Left lung (tissue), 14 donors: ENCODE measurements at regions of chr7 and their contacts with region 1.

Region 1: DNA sequence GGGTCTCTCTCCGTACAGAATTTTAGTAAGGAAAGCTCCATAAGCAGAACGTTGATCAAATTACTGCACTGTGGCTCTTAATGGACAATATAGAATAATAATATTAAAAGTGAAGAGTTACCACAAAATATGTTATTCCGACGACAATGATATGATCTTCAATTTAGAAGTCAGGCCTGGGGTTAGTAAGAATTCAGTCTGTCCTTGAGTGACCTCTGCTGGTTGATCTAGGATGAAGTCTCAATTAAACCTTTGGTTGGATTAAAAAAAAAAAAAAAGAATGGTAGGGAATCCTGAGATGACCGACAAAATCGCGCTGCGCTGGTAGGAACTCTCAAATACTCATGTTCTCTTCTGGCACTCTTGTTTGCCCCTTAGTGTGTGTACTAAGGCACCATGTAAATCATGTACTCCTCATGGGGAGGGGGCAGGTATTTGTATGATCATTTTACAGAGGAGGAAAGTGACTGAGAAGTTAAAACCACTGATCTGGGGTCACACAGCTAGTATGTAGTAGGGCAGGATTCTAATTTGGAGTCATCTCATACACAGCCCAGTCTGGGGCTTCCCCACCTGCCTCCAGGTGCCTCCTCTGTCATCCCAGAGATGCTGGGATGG is 161.3 kb upstream of the NPVF start:
- DNase-seq: peak in 1 of 4 donors; percentile 81
- ATAC-seq: peak; percentile 62
- H3K4me3 ChIP-seq: no peak overlapping the region
- H3K27ac ChIP-seq: no peak overlapping the region
- H3K4me1 ChIP-seq: no peaks in the 10 kb centered on the region
- H3K27me3 ChIP-seq: no peaks in the 10 kb centered on the region
- CTCF ChIP-seq: peak in 1 of 2 donors; percentile 44

Region 2: DNA sequence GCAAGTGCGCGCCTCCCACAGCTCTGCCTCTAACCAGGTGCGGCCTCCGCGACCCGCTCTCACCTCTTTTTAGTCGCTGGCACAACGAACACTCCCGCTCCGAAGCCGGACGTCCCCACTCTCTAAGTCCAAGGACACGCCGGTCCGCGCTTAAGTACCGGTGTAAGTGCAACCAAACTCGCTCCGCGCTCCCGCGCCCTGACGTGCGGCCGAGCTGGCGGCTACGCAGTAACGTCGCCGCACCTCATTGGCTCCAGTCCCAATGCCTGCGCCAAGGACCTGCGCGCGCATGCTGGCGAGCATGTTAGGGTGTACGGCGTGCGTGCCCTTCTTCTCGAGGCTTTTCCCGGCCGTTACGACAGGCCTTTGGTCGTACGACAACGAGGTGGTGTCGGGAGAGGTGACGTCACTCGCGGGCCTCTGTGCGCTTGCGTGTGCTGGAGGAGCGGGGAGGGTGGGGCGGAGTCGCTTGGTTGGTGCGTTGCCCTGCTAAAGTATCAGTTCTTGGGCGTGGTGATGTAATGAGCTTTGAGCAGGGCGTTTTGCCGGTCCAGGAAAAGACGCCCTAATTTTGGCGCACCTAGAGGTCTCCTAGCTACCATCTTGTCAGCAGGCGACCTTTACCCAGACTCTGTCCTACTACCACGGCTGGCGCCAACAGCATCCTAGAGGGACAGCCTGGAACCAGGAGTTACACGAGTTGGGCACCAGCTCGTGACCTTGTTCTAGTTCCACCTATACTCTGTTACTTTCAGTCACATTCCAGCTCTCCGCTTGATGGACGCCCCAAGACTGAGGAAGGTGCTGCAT is 264.3 kb before region 1 on chr7 and contains the start of gene CYCS:
- intact Hi-C with region 1: no loop called
- DNase-seq: peak; percentile 99 to 100 (median 100)
- ATAC-seq: peak; percentile 97
- H3K4me3 ChIP-seq: peak within 1 kb of the TSS; percentile 80 to 96
- H3K27ac ChIP-seq: peak within 1 kb of the TSS; percentile 83 to 89
- H3K4me1 ChIP-seq: peaks cover 0 to 21% of the 10 kb centered on the region in 2 donors
- H3K27me3 ChIP-seq: no peaks in the 10 kb centered on the region
- CTCF ChIP-seq: no peak
- polyA plus RNA-seq, gene CYCS: 60.4 to 83.5 (median 64.1) TPM

Region 3: DNA sequence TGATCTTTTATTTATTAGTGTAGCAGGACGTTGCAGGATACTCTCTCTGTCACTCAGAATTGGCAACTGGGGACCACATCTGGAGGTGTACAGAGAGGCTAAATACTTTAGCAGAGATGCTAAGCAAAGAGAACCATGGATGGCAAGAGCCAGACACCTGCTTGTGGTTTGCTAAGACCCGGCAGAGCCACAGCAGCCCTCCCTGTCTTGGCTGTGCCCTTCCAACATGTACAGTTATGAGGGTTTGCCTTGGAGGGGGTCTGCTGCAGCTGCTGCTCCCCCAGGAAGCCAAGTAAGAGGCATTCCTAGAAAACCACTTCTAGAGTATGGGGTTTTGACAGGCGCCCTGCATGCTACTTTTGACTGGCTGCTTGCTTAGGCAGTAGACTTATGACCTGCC is 166.4 kb before region 1 on chr7:
- intact Hi-C with region 1: no loop called
- DNase-seq: no peak
- ATAC-seq: no peak
- H3K4me3 ChIP-seq: no peak overlapping the region
- H3K27ac ChIP-seq: no peak overlapping the region
- H3K4me1 ChIP-seq: no peaks in the 10 kb centered on the region
- H3K27me3 ChIP-seq: peaks cover 0 to 13% of the 10 kb centered on the region in 2 donors
- CTCF ChIP-seq: no peak

Region 4: GRCh38 chr7:25259587-25260243 is 129.9 kb before region 1 on chr7:
- intact Hi-C with region 1: loop called in 1 of 2 experiments (anchors 2 kb)
- DNase-seq: peak in 2 of 4 donors; percentile 74 to 83
- ATAC-seq: peak; percentile 89
- H3K4me3 ChIP-seq: no peak overlapping the region
- H3K27ac ChIP-seq: no peak overlapping the region
- H3K4me1 ChIP-seq: peaks cover 4 to 24% of the 10 kb centered on the region in 2 donors
- H3K27me3 ChIP-seq: peaks cover 0 to 4% of the 10 kb centered on the region in 2 donors
- CTCF ChIP-seq: peak; percentile 66 to 72

Region 5: GRCh38 chr7:25537662-25538375 is 148.2 kb after region 1 on chr7:
- intact Hi-C with region 1: no loop called
- DNase-seq: no peak
- ATAC-seq: no peak
- H3K4me3 ChIP-seq: no peak overlapping the region
- H3K27ac ChIP-seq: no peak overlapping the region
- H3K4me1 ChIP-seq: no peaks in the 10 kb centered on the region
- H3K27me3 ChIP-seq: no peaks in the 10 kb centered on the region
- CTCF ChIP-seq: no peak

Region 6: DNA sequence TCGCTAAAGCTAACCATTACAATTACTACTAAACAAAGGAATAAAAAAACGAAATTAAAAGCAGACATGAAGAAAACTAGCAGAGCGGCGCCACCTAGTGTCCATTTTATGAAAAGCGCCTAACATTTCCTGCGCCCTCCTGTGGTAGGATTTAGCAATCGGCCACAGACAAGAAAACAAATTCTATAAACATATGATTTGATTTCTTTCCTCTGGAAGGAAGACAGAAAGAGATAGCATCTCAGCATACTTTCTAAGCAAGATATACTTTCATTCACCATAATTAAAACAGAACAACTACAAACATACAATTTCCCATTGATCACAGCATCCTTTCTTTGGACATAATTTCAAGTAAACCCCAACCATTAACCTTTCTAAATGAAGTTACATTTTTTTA is 176.4 kb after region 1 on chr7:
- intact Hi-C with region 1: loop called in 1 of 2 experiments (anchors 5 kb)
- DNase-seq: peak in 3 of 4 donors; percentile 50 to 85 (median 81)
- ATAC-seq: peak; percentile 71
- H3K4me3 ChIP-seq: no peak overlapping the region
- H3K27ac ChIP-seq: no peak overlapping the region
- H3K4me1 ChIP-seq: no peaks in the 10 kb centered on the region
- H3K27me3 ChIP-seq: no peaks in the 10 kb centered on the region
- CTCF ChIP-seq: peak; percentile 93 to 100

Region 7: DNA sequence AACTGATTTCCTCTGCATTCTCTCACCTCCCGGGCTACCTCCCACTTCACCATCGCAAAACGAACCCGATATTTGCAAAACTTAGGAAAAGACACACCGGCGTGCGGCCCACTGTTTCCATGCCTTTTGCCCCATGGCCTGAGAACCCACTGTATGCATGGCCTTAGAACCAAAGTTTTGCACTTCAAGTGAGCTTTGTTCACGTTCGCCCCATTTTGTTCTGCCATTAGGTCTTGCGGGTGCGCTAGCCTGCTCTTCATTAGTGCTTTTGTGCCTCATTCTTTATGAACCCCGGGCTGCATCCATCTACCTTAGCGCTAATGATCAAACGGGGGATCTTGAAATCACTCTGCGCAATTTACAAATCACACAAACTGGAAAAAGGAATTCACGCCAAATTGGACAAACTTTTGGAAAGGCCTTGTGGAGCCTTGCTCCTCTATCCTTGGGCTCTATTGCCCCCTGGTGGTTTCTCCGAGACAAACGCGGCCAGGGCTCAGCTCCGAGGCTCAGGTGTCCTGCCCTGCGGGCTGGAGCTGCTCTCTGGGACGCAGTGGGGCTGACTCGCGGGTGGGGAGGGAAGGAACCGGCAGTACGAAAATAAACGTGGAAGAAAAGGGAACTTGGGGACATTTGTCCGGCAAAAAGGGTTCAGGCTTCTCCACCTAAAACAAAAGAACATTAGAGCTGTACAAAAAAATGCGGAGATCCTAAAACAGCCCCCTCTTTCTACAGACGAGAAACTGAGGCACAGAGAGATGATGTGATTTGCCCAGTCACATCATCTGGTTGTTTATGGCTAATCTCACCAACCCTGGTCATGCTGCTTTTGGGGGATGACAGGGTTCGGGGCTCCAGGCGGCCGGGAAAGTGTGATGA is 462.0 kb after region 1 on chr7:
- intact Hi-C with region 1: loop called in 1 of 2 experiments (anchors 5 kb)
- DNase-seq: peak; percentile 80 to 92 (median 85)
- ATAC-seq: peak; percentile 87
- H3K4me3 ChIP-seq: no peak overlapping the region
- H3K27ac ChIP-seq: peak overlapping the region in 1 of 2 donors; percentile 63
- H3K4me1 ChIP-seq: peaks cover 26% of the 10 kb centered on the region in 2 donors
- H3K27me3 ChIP-seq: peaks cover 53 to 83% of the 10 kb centered on the region in 2 donors
- CTCF ChIP-seq: peak; percentile 81 to 85